Activated CD4-positive, alpha-beta T cell treated with anti-CD3 and anti-CD28 coated beads, Interleukin-2, amount 10 ng/mL, durations not matched to agents 24 days and 14 days (primary cell): ENCODE measurements at regions of chr7 and their contacts with region 1.

Region 1: DNA sequence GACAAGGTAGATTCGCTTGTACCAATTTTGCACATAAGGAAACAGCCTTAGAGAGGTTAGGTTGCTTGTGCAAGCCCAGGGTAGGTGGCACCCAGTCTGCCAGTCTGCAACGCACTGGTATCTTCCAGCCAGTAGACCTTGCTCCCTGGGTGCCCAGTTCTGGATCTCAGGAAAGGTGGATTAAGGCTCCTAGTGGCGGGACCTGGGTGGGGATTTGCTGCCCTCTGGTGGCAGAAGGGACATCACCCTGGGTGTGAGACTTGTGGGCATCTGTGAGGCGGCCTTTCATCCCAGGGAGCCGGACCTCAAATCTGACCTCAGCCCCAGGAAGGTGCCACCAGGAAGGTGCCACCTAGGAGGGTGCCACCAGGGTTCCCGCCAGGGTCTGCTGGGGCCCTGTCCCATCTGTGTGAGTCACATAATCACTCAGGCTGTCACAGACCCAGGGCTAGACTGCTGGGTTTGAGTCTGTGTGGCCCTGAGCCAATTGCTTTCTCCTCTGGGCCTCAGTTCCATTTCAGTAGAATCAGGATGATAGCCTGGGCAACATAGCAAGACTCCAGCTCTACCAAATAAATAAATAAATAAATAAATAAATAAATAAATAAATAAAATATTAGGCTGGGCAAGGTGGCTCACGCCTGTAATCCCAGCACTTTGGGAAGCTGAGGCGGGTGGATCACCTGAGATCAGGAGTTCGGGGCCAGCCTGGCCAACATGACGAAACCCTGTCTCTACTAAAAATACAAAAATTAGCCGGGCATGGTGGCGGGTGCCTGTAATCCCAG is 5.3 kb upstream of the PRKRIP1 start:
- DNase-seq: peak; percentile 90
- H3K4me3 Mint-ChIP-seq: no peak overlapping the region
- H3K27ac Mint-ChIP-seq: no peak overlapping the region
- H3K4me1 Mint-ChIP-seq: peaks cover 5% of the 10 kb centered on the region
- H3K27me3 Mint-ChIP-seq: no peaks in the 10 kb centered on the region

Region 2: DNA sequence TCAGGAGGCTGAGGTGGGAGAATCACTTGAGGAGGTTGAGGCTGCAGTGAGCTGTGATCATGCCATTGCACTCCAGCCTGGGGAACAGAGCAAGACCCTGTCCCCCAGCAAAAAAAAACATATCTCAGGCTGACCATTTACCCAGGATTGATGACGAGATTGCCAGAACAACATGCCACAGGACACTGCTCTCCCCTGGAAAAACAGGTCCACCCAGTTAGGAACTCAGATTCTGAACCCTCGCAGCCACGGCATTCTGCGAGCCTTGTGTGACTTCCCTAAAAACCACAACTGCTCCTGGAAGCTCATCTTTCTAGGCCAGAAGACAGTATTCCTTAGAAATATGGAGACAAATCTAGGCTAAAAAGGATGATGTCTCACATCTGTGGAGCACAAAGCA is 146.3 kb before region 1 on chr7:
- intact Hi-C with region 1: no loop called
- DNase-seq: no peak
- H3K4me3 Mint-ChIP-seq: no peak overlapping the region
- H3K27ac Mint-ChIP-seq: no peak overlapping the region
- H3K4me1 Mint-ChIP-seq: no peaks in the 10 kb centered on the region
- H3K27me3 Mint-ChIP-seq: no peaks in the 10 kb centered on the region

Region 3: GRCh38 chr7:102279537-102280400 is 111.1 kb before region 1 on chr7:
- intact Hi-C with region 1: loop called (anchors 1 kb)
- DNase-seq: peak; percentile 85
- H3K4me3 Mint-ChIP-seq: no peak overlapping the region
- H3K27ac Mint-ChIP-seq: no peak overlapping the region
- H3K4me1 Mint-ChIP-seq: peaks cover 7% of the 10 kb centered on the region
- H3K27me3 Mint-ChIP-seq: peaks cover 6% of the 10 kb centered on the region